ENCODE measurements at regions of chr20 and their contacts with region 1.

Region 1: GRCh38 chr20:47600967-47601547 is 99.4 kb downstream of the NCOA3 start:
- DNase-seq: no peak
- H3K4me3 ChIP-seq: no peak overlapping the region
- H3K27ac ChIP-seq: no peak overlapping the region
- H3K4me1 ChIP-seq: peaks cover 17% of the 10 kb centered on the region
- H3K27me3 ChIP-seq: no peaks in the 10 kb centered on the region
- CTCF ChIP-seq: no peak

Region 2: DNA sequence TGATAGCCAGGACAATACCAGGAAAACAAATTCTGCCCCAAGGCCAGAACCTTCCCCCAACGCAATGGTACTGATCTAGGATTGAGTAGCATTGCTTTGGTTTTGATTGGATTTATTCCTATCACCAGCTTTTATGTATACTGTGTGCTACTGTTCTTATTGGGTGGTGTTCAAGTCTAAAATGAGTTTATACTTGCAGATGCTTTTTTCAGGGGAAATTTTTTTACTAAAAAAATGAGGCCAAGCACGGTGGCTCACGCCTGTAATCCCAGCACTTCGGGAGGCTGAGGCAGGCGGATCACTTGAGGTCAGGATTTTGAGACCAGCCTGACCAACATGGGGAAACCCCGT is 361.4 kb before region 1 on chr20:
- CTCF ChIA-PET with region 1: no interaction called
- POLR2A ChIA-PET with region 1: interaction called, 17 read pairs
- intact Hi-C with region 1: no loop called
- DNase-seq: no peak
- H3K4me3 ChIP-seq: no peak overlapping the region
- H3K27ac ChIP-seq: no peak overlapping the region
- H3K4me1 ChIP-seq: no peaks in the 10 kb centered on the region
- H3K27me3 ChIP-seq: no peaks in the 10 kb centered on the region
- CTCF ChIP-seq: no peak

Measured in PC-9 (cell line).